Activated CD8-positive, alpha-beta memory T cell treated with anti-CD3 and anti-CD28 coated beads, Interleukin-2, amount 10 ng/mL, durations not matched to agents 7 days and 5 days (primary cell): ENCODE measurements at regions of chr13 and their contacts with region 1.

Region 1: GRCh38 chr13:106561551-106562170 is 6.3 kb downstream of the ARGLU1 start:
- DNase-seq: peak; percentile 58
- ATAC-seq: peak; percentile 66
- H3K4me3 Mint-ChIP-seq: peak overlapping the region; percentile 19
- H3K27ac Mint-ChIP-seq: no peak overlapping the region
- H3K4me1 Mint-ChIP-seq: peaks cover 58% of the 10 kb centered on the region
- H3K27me3 Mint-ChIP-seq: no peaks in the 10 kb centered on the region

Region 2: DNA sequence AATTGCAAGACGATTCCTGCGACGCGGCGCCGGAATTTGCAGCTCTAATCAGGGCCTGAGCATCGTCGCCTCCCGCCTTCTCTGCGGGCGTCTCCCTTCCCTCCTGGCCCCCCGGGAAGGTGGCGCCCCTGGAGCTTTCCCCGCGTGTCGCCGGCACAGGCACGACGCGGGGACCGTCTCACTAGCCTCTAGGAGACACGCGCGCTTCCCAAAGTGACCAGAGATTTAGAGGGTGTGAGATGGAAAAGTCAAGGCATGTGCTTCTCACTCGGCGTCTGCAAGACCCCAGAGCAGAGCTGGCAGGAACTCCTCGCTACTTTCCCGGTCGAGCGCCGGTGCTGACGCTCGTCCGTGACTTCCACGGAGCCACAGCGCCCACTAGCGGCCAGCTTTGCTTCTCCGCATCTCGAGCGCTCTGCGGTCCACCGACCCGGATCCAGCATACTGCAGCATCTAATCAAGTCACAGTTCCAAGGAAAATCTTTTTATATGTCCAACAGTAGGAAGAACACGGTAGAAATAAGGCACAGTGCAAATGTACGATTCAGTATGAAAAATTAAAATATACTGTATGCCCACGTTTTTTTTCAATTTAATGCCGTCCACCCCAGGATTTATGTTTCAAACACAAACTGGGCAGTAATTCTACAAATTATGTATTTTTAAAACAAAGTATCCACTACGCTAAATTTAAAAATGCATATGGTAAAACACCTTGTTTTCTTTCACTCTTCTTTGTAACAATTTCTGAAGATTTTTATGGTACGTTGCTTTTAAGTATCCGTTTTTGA is 25.2 kb before region 1 on chr13:
- CTCF ChIA-PET with region 1: interaction called, 36 read pairs
- DNase-seq: peak; percentile 87
- ATAC-seq: peak; percentile 31
- H3K4me3 Mint-ChIP-seq: peak overlapping the region; percentile 83
- H3K27ac Mint-ChIP-seq: peak overlapping the region; percentile 67
- H3K4me1 Mint-ChIP-seq: peaks cover 14% of the 10 kb centered on the region
- H3K27me3 Mint-ChIP-seq: peaks cover 30% of the 10 kb centered on the region

Region 3: GRCh38 chr13:107493266-107493665 is 931.6 kb after region 1 on chr13:
- CTCF ChIA-PET with region 1: no interaction called
- DNase-seq: no peak
- ATAC-seq: no peak
- H3K4me3 Mint-ChIP-seq: no peak overlapping the region
- H3K27ac Mint-ChIP-seq: no peak overlapping the region
- H3K4me1 Mint-ChIP-seq: no peaks in the 10 kb centered on the region
- H3K27me3 Mint-ChIP-seq: no peaks in the 10 kb centered on the region